ENCODE measurements at regions of chr6 and their contacts with region 1.

Region 1: GRCh38 chr6:137697267-137697938 is 169.7 kb upstream of the TNFAIP3 start:
- DNase-seq: peak; percentile 97
- H3K4me3 ChIP-seq: no peak overlapping the region
- H3K27ac ChIP-seq: peak overlapping the region; percentile 71
- H3K4me1 ChIP-seq: peaks cover 31% of the 10 kb centered on the region
- H3K27me3 ChIP-seq: no peaks in the 10 kb centered on the region
- CTCF ChIP-seq: peak in 1 of 2 donors; percentile 17
- POLR2A ChIP-seq: peak; percentile 24

Region 2: DNA sequence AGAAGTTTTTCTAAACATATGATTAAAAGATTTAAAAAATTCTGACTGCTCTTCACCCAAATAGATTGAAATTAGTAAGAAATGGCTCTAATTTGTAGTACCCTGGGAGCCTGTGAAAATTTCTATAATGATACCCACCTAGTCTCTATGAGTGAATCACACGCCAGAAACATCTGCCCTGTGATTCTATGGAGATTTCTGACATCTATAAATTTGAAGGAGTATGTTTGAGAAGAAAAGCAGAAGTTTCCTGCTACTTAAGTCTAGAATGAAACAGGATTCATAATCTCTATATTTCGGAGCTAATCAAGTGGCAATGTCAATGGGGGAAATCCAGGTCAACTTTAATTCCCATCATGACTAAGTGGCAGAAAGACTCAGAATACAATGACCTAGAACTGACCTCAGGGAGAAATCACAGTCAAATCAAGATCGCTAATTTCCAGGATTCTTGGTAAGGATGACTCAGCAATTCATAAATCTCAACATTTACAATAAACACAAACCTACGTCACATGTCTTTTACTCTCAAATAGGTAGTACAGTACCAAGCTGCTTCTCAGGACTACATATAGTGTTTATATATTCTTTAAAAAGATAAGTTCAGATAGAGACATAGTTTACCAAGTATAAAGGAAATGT is 16.6 kb before region 1 on chr6:
- CTCF ChIA-PET with region 1: interaction called, 20 read pairs
- POLR2A ChIA-PET with region 1: no interaction called
- dilution Hi-C with region 1: no loop called
- intact Hi-C with region 1: loop called (anchors 1 kb)
- DNase-seq: peak; percentile 88
- H3K4me3 ChIP-seq: no peak overlapping the region
- H3K27ac ChIP-seq: no peak overlapping the region
- H3K4me1 ChIP-seq: peaks cover 13% of the 10 kb centered on the region
- H3K27me3 ChIP-seq: no peaks in the 10 kb centered on the region
- CTCF ChIP-seq: no peak
- POLR2A ChIP-seq: no peak

Region 3: GRCh38 chr6:137685798-137686375 is 11.5 kb before region 1 on chr6:
- CTCF ChIA-PET with region 1: interaction called, 20 read pairs
- POLR2A ChIA-PET with region 1: no interaction called
- dilution Hi-C with region 1: no loop called
- intact Hi-C with region 1: loop called (anchors 1 kb)
- DNase-seq: no peak
- H3K4me3 ChIP-seq: no peak overlapping the region
- H3K27ac ChIP-seq: no peak overlapping the region
- H3K4me1 ChIP-seq: peaks cover 8% of the 10 kb centered on the region
- H3K27me3 ChIP-seq: no peaks in the 10 kb centered on the region
- CTCF ChIP-seq: no peak
- POLR2A ChIP-seq: no peak

Region 4: GRCh38 chr6:137744877-137745276 is 47.5 kb after region 1 on chr6:
- CTCF ChIA-PET with region 1: no interaction called
- POLR2A ChIA-PET with region 1: no interaction called
- dilution Hi-C with region 1: no loop called
- intact Hi-C with region 1: no loop called
- DNase-seq: no peak
- H3K4me3 ChIP-seq: no peak overlapping the region
- H3K27ac ChIP-seq: no peak overlapping the region
- H3K4me1 ChIP-seq: no peaks in the 10 kb centered on the region
- H3K27me3 ChIP-seq: no peaks in the 10 kb centered on the region
- CTCF ChIP-seq: no peak
- POLR2A ChIP-seq: no peak

Region 5: DNA sequence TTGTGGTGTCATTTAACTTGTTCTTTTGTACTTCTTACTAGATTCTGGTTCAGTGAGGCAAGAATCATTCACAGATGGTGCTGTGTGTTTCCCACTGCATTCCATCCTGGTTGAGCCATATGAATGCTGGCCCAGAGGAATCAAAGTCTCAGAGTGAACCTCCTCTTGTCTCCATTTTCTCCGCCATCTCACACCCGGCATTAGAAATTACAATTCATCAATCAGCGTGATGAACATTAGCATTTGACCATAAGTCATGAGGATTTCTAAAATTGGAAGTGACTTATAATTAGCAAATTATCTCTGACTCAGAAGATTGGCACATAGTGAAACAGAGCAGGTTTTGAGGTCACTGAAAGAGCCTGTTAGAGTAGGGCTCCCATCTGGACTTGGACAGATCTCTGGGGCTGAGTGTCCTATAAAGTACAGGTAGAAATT is 194.9 kb after region 1 on chr6:
- CTCF ChIA-PET with region 1: no interaction called
- POLR2A ChIA-PET with region 1: no interaction called
- dilution Hi-C with region 1: no loop called
- intact Hi-C with region 1: no loop called
- DNase-seq: no peak
- H3K4me3 ChIP-seq: no peak overlapping the region
- H3K27ac ChIP-seq: no peak overlapping the region
- H3K4me1 ChIP-seq: no peaks in the 10 kb centered on the region
- H3K27me3 ChIP-seq: no peaks in the 10 kb centered on the region
- CTCF ChIP-seq: no peak
- POLR2A ChIP-seq: no peak

Region 6: DNA sequence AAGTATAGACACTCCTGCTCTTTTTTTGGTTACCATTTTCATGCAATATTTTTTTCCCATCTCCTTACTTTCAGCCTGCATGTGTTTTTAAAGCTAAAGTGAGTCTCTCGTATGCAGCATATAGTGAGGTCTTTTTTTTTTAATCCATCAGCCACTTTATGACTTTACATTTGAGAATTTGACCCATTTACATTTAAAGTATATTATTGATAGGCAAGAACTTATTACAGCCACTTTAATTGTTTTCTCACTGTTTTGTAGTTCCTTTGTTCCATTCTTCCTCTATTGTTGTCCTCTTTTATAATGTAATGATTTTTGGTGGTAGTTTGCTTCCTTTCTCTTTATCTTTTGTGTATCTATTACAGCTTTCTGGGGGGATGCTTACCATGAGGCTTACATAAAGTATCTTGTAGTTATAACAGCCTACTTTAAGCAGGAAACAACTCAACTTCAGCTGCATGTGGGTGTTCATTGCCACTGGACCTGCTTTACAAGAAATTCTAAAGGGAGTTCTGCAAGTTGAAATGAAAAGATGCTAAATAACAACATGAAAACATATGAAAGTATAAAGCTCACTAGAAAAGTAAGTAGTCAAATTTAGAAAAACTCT is 241.5 kb after region 1 on chr6:
- CTCF ChIA-PET with region 1: interaction called, 18 read pairs
- POLR2A ChIA-PET with region 1: no interaction called
- dilution Hi-C with region 1: no loop called
- intact Hi-C with region 1: no loop called
- DNase-seq: no peak
- H3K4me3 ChIP-seq: no peak overlapping the region
- H3K27ac ChIP-seq: no peak overlapping the region
- H3K4me1 ChIP-seq: no peaks in the 10 kb centered on the region
- H3K27me3 ChIP-seq: no peaks in the 10 kb centered on the region
- CTCF ChIP-seq: no peak
- POLR2A ChIP-seq: no peak

Region 7: GRCh38 chr6:137944793-137945498 is 247.5 kb after region 1 on chr6:
- CTCF ChIA-PET with region 1: interaction called, 18 read pairs
- POLR2A ChIA-PET with region 1: no interaction called
- dilution Hi-C with region 1: no loop called
- intact Hi-C with region 1: no loop called
- DNase-seq: peak; percentile 56
- H3K4me3 ChIP-seq: no peak overlapping the region
- H3K27ac ChIP-seq: no peak overlapping the region
- H3K4me1 ChIP-seq: no peaks in the 10 kb centered on the region
- H3K27me3 ChIP-seq: no peaks in the 10 kb centered on the region
- CTCF ChIP-seq: peak; percentile 58 to 59
- POLR2A ChIP-seq: no peak

Region 8: DNA sequence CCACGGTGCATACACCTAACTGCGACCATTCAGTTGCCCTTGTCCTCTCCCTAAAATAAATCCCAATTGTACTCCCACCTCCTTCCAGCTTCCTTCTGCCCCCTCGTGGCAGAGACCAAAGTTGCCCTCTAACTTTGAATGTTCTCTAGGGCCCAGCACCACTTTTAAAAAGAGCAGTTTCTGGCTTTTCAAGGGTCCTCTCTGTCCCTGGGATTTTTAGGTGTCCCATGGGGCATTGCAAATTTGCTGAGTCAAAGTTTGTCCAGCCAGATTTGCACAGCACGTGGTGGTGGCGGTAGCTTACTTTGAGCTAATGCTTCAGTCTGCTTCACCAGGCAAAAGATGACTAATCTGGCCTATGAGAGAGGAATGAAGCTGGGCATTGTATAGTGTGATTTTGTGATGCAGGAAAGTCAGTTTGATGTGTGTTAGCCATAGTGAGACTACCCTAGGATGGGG is 309.6 kb after region 1 on chr6:
- CTCF ChIA-PET with region 1: interaction called, 17 read pairs
- POLR2A ChIA-PET with region 1: no interaction called
- dilution Hi-C with region 1: no loop called
- intact Hi-C with region 1: no loop called
- DNase-seq: peak; percentile 27
- H3K4me3 ChIP-seq: no peak overlapping the region
- H3K27ac ChIP-seq: no peak overlapping the region
- H3K4me1 ChIP-seq: no peaks in the 10 kb centered on the region
- H3K27me3 ChIP-seq: no peaks in the 10 kb centered on the region
- CTCF ChIP-seq: peak; percentile 50 to 63
- POLR2A ChIP-seq: no peak